ENCODE measurements at regions of chr1 and their contacts with region 1.

Region 1: DNA sequence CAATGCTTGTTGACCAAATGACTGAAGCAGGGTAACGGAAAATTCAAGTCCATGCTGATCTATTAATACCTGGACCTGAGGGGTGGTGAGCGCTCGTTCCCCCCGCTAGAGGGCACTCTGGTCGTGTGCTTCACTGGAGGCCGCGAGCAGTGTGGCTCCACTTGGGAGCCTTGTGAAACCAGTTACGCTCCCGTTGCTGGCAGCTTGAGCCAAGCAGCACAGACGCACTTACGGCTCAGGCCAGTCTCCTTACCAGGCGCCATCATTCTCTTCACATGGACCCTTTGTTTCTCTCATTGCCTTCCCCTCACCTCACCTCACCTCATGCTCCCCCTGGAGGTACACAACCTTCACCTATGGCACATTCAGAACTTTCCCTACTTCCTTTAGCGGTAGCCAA is 49.7 kb upstream of the TSPAN2 start:
- DNase-seq: peak; percentile 81
- H3K4me3 ChIP-seq: no peak overlapping the region
- H3K27ac ChIP-seq: no peak overlapping the region
- H3K4me1 ChIP-seq: no peaks in the 10 kb centered on the region
- H3K27me3 ChIP-seq: no peaks in the 10 kb centered on the region
- CTCF ChIP-seq: peak; percentile 81

Region 2: GRCh38 chr1:115107516-115108260 is 31.3 kb before region 1 on chr1:
- intact Hi-C with region 1: no loop called
- DNase-seq: no peak
- H3K4me3 ChIP-seq: no peak overlapping the region
- H3K27ac ChIP-seq: no peak overlapping the region
- H3K4me1 ChIP-seq: no peaks in the 10 kb centered on the region
- H3K27me3 ChIP-seq: no peaks in the 10 kb centered on the region
- CTCF ChIP-seq: no peak

Region 3: DNA sequence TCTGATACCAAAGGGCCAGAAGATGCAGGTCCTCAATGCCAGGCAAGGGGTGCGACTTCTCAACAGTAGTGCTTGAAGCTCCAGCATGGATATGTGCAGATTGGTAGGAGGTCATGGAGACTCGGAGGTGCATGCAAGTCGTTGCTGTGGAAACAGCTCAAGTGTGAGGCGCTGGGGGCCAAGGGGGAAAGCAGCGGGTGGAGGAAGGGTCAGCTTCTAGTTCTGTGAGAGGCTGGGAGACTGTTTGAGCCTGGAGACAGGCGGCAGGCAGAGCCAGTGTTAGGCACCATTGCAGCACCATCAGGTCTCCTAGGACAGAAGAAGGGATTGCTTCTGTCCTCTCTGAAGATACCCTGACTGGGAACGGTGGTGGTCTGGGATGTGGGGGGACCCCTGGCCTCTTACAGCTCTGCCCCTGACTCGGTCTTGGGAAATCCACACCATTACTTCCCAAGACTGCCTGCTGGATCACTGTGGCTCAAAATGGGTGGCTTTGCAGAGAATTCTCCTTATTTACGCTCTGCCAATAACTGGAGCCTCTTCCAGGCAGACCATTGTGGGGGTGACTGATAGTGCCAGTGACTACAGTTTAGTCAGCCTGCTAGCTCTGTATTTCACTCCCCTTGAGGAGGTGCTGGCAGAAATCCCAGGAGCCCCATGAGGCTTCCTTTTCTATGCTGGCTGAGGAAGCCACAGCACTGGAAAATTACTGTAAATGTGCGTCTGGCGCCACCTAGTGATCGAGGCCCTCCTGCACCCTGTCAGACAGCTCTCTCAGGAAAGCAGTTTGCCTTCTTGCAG is 456.5 kb after region 1 on chr1:
- intact Hi-C with region 1: loop called (anchors 2 kb)
- DNase-seq: peak; percentile 82
- H3K4me3 ChIP-seq: no peak overlapping the region
- H3K27ac ChIP-seq: no peak overlapping the region
- H3K4me1 ChIP-seq: no peaks in the 10 kb centered on the region
- H3K27me3 ChIP-seq: no peaks in the 10 kb centered on the region
- CTCF ChIP-seq: peak; percentile 89

Measured in colonic mucosa (tissue), 4 donors.